GM13976 (cell line): ENCODE measurements at regions of chr4 and their contacts with region 1.

Region 1: GRCh38 chr4:25367004-25367621 is 9.9 kb upstream of the ANAPC4 start:
- DNase-seq: peak; percentile 34
- CTCF ChIP-seq: peak; percentile 49

Region 2: DNA sequence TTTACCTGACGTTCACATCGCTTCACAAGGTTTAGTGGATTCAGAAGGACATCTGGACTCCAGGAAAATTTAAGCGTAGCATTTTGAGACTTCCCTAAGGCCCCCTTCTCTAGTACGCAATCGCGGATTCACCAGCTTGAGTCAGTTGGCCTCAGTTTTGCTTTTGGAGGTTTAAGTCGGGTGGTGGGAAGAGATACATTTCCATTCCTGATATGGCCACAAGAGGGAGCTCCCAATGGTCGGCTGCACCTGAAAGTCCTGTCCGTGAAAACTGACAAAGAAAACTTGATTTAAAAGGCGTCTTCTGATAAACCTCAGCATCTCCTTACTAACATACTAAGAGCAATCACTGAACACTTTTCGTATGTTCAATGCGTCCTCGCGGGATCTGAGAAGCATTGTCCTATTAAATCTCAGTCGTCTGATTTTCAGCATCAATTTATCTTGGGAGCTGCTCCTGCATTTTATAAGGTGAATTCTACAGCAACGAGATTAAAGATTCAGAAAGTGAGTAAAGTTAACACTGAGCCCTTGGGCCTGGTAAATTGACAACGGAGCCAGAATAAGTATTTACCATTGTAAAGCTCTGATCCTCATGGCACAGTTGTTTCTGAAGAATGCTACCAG is 386.9 kb before region 1 on chr4:
- in situ Hi-C with region 1: loop called (anchors 25 kb)
- DNase-seq: peak; percentile 59
- CTCF ChIP-seq: peak; percentile 79

Region 3: GRCh38 chr4:25180524-25181131 is 186.5 kb before region 1 on chr4:
- in situ Hi-C with region 1: loop called (anchors 10 kb)
- DNase-seq: peak; percentile 30
- CTCF ChIP-seq: peak; percentile 61